ENCODE measurements at regions of chr19 and their contacts with region 1.

Region 1: GRCh38 chr19:8585894-8586750 is 8.9 kb upstream of the MYO1F start:
- DNase-seq: peak; percentile 76
- H3K4me3 Mint-ChIP-seq: no peak overlapping the region
- H3K27ac Mint-ChIP-seq: no peak overlapping the region
- H3K4me1 Mint-ChIP-seq: peaks cover 3% of the 10 kb centered on the region
- H3K27me3 Mint-ChIP-seq: peaks cover 3% of the 10 kb centered on the region

Region 2: GRCh38 chr19:8412783-8413628 is 173.1 kb before region 1 on chr19 and contains the start of gene MARCHF2:
- CTCF ChIA-PET with region 1: interaction called, 23 read pairs
- POLR2A ChIA-PET with region 1: interaction called, 3 read pairs
- DNase-seq: peak; percentile 98
- H3K4me3 Mint-ChIP-seq: peak within 1 kb of the TSS; percentile 58
- H3K27ac Mint-ChIP-seq: no peak within 1 kb of the TSS
- H3K4me1 Mint-ChIP-seq: peaks cover 10% of the 10 kb centered on the region
- H3K27me3 Mint-ChIP-seq: no peaks in the 10 kb centered on the region
- total RNA-seq, gene MARCHF2: 20.6 to 20.8 TPM

Measured in activated CD4-positive, alpha-beta memory T cell treated with anti-CD3 and anti-CD28 coated beads, Interleukin-2, amount 10 ng/mL, durations not matched to agents 7 days and 5 days (primary cell).